ENCODE measurements at regions of chr20 and their contacts with region 1.

Region 1: GRCh38 chr20:54649511-54649962 is 174.1 kb downstream of the DOK5 start:
- DNase-seq: peak; percentile 83
- H3K4me3 ChIP-seq: no peak overlapping the region
- H3K27ac ChIP-seq: peak overlapping the region; percentile 53
- H3K4me1 ChIP-seq: peaks cover 17% of the 10 kb centered on the region
- H3K27me3 ChIP-seq: no peaks in the 10 kb centered on the region

Region 2: GRCh38 chr20:54115151-54115854 is 534.2 kb before region 1 on chr20:
- in situ Hi-C with region 1: loop called (anchors 10 kb)
- DNase-seq: peak; percentile 46
- H3K4me3 ChIP-seq: 0 out of 2 replicates have a peak overlapping the region, but pooled peaks have one; percentile 6
- H3K27ac ChIP-seq: peak overlapping the region; percentile 59
- H3K4me1 ChIP-seq: peaks cover 12% of the 10 kb centered on the region
- H3K27me3 ChIP-seq: no peaks in the 10 kb centered on the region

Region 3: DNA sequence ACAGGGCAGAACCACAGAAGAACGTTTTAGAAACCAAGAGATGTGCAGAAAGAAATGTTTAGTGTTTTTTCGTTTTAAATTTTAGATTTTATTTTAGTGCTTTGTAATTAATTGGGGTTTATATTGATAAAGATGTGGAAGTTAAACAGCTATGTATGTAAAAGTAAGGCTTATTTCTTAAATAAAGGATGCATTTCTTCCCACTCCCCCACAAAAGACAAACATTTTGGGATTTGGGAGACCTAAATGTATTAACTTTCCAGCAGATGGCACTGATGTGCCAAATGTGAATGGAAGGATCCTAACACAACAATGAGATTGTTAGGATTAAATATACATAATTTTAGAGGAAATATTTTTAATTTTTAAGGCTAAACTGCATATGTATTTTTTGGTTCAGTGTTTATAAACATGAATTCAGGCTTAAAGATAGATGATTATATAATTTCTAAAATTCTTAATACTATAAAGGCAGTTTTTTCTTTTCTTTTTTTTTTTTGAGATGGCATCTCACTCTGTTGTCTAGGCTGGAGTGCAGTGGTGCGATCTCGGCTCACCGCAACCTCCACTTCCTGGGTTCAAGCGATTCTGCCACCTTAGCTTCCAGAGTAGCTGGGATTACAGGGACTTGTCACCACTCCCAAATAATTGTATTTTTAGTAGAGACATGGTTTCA is 429.6 kb before region 1 on chr20:
- in situ Hi-C with region 1: loop called (anchors 5 kb)
- DNase-seq: peak; percentile 72
- H3K4me3 ChIP-seq: no peak overlapping the region
- H3K27ac ChIP-seq: no peak overlapping the region
- H3K4me1 ChIP-seq: peaks cover 14% of the 10 kb centered on the region
- H3K27me3 ChIP-seq: no peaks in the 10 kb centered on the region

Region 4: DNA sequence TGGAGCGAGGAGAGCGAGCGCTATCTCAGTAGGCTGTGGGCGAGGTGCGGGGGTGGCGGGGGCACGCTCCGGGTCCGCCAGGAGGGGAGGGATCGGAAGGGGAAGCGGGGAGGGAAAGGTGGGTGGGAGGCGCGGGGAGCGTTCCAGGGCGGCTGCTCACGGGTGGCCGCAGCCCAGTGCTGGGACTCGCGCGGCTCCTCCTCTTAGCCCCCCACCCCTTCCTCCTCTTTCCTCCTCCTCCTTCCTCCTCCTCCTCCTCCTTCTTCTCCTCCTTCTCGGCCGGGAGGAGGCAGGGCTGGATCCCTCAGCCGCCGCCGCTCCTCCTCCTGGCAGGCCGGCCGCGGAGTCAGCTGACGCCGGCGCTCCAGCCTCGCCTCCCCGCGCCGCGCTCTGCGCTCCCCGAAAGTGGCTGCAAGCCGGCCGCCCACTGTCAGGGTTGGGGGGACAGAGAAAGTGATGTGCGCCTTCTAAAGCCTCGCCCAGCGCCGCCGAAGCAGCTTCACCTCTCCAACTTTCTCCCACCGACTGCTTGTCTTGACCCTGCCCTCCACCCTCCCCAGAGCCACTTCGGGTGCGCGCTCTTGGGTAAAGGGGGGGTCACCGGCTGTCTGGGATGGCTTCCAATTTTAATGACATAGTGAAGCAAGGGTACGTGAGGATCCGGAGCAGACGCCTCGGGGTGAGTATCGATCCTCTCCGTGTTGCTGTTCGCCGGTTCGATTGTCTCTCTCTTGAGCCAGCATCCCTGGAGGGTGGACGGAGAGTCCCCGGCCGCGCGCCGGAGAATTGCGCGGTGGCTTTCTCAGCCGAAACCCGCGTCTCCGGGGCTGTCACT is 174.0 kb before region 1 on chr20 and contains the start of gene DOK5:
- in situ Hi-C with region 1: loop called (anchors 10 kb)
- DNase-seq: peak; percentile 71
- H3K4me3 ChIP-seq: peak within 1 kb of the TSS; percentile 94
- H3K27ac ChIP-seq: no peak within 1 kb of the TSS
- H3K4me1 ChIP-seq: peaks cover 10% of the 10 kb centered on the region
- H3K27me3 ChIP-seq: no peaks in the 10 kb centered on the region
- total RNA-seq, gene DOK5: 10.8 and 11.8 TPM in 2 replicates

Measured in GM23248 (cell line).